ENCODE measurements at regions of chr14 and their contacts with region 1.

Region 1: DNA sequence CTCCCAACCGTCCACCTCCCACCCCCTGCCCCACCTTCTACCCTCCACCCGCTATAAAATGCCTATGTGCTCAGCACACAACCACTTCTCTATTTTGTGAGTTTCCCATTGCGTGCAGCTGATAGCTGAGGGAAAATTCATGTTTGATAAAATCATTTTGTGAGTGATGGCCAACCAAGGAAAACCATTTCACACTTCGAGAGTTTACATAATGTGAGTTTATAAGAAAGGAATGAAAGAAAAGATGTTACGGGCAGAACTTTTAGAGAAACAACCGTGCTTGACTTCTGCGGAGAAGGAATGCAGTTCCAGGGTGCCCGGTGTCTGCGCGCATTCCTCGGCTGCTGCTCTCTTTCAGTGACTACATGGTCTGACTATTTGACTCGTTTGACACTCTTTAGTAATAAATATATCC is 140.9 kb downstream of the EFCAB11 start:
- DNase-seq: no peak
- H3K4me3 ChIP-seq: peak overlapping the region; percentile 4 to 31 (median 28)
- H3K27ac ChIP-seq: peak overlapping the region; percentile 65 to 80 (median 72)
- H3K4me1 ChIP-seq: peaks cover 6 to 27% (median 18%) of the 10 kb centered on the region in 4 donors
- H3K27me3 ChIP-seq: no peaks in the 10 kb centered on the region
- CTCF ChIP-seq: no peak
- EP300 ChIP-seq: no peak
- POLR2A ChIP-seq: no peak

Region 2: DNA sequence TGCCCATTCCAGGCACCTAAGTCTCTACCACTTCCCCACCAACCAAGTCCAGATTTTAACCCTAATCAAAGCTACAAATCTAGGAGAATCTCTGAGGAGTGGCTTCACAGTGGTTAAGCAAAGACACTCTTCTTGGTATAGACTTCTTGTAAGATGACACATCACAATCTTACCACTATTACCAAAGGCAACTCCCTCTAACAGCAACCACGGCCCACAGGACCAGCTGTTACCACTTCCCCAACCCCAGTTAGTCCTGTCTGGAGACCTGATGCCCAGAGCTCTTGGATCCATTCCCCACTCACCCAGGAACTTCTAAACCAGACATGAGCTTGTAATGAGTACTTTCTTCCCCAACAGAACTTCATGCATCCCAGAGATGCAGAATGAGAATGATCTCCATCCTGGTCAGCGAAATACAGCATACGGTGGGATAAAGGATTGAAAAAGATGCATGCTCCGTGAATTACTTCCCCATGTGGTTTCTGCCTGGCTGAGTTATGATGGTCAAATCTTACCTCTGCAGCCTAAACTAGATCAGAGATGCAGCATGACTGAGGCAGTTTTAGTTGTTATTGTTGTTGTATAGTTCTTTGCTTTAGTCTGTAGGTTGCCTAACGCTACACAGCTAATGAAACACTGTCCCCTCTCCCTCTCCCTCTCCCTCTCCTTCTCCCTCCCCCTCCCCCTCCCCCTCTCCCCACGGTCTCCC is 308.9 kb before region 1 on chr14:
- intact Hi-C with region 1: no loop called
- DNase-seq: no peak
- H3K4me3 ChIP-seq: no peak overlapping the region
- H3K27ac ChIP-seq: no peak overlapping the region
- H3K4me1 ChIP-seq: peaks cover 4 to 29% (median 18%) of the 10 kb centered on the region in 4 donors
- H3K27me3 ChIP-seq: no peaks in the 10 kb centered on the region
- CTCF ChIP-seq: no peak
- EP300 ChIP-seq: no peak
- POLR2A ChIP-seq: no peak

Region 3: DNA sequence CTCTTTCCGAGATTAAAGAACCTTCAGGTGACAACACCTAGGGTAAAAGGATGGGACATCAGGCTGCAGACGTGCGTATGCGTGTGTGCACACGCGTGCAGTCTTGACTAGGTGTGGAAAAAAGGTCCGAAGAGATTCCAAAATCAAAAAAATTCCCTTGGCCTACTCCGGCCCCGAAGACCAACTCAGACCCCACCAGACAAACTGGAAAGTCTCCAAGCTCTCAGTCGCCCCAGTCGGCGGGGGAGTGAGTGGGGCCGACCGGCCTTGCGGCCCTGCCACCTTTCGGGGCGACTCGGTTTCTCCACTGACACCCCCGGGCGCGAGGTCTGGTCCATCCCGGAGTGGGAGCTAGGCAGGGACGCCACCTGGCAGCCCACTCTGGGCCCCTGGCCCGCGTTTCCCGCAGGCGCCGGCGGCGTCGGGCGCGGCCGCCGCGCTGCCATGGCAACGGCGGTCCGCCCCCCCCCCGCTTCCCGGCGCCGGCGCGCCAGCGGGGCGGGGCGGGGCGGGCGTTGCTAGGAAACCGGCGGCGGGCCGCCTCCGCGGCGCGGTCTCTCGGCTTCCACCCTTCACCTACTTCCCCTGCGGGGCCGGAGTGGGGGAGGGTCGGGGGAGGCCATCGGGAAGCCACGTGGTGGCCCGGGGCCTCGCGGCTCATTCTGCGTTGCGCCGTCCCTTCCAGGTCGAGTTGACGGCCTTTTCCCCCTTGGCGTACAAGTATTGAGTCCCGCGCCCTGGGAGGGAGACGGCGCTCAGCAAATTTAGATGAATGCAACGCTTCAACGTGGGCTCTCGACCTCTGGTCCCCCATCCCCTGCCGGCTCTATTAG is 112.2 kb before region 1 on chr14:
- intact Hi-C with region 1: loop called (anchors 10 kb)
- DNase-seq: peak; percentile 92
- H3K4me3 ChIP-seq: peak overlapping the region; percentile 52 to 65 (median 62)
- H3K27ac ChIP-seq: peak overlapping the region; percentile 74 to 85 (median 82)
- H3K4me1 ChIP-seq: peaks cover 17 to 32% (median 20%) of the 10 kb centered on the region in 4 donors
- H3K27me3 ChIP-seq: no peaks in the 10 kb centered on the region
- CTCF ChIP-seq: no peak
- EP300 ChIP-seq: peak; percentile 17
- POLR2A ChIP-seq: no peak